WTC11 (cell line): ENCODE measurements at regions of chr3 and their contacts with region 1.

Region 1: DNA sequence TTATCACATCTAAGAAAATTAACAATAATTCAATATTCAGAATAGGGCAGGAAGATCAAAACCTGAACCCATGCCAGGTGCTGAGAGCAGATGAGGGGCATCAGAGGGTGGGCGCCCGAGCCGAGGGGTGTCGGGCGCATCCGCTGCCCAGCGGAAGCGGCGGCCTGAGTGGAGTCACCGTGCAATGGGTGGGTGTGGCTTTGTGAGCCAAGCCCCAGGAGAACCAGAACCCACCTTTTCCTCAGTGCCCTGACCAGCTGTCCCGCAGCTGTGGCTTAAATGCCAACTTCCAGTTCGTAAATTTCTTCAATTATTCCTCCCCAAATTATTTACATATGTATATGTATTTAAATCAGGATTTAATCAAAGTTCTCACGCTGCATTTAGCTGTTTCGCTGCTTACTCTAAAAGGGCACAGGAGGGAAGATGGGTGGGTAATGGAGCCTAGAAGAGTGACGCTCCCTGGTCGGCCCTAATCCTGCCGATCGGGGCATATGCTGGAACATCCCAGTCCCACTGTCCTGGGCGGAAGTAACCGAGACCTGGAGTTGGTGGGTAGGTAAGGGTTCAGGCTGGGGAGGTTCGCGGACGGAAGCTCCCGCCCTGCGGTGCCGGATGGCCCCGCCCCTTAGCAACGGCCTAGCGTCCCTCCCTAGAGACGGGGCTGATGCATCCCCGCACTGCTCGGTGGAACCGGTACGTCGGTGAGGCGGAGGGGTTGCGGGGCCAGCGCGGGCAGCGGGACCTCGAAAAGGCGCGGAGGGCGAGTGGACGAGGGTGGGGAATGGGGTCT is 1.3 kb downstream of the DNAH1 start:
- DNase-seq: peak; percentile 93
- ATAC-seq: peak; percentile 97
- H3K4me3 Mint-ChIP-seq: peak overlapping the region; percentile 67
- H3K27ac Mint-ChIP-seq: no peak overlapping the region; the same call in 1 of the 2 replicates
- H3K4me1 Mint-ChIP-seq: peaks cover 6% of the 10 kb centered on the region; the same call in 1 of the 2 replicates
- H3K27me3 Mint-ChIP-seq: peaks cover 27% of the 10 kb centered on the region
- CTCF ChIP-seq: no peak

Region 2: GRCh38 chr3:52299879-52300611 is 17.4 kb before region 1 on chr3:
- CTCF ChIA-PET with region 1: interaction called, 11 read pairs
- POLR2A ChIA-PET with region 1: interaction called, 3 read pairs
- DNase-seq: peak; percentile 26
- ATAC-seq: peak; percentile 55
- H3K4me3 Mint-ChIP-seq: peak overlapping the region; percentile 65
- H3K27ac Mint-ChIP-seq: no peak overlapping the region
- H3K4me1 Mint-ChIP-seq: peaks cover 18% of the 10 kb centered on the region
- H3K27me3 Mint-ChIP-seq: peaks cover 6% of the 10 kb centered on the region
- CTCF ChIP-seq: no peak